A549 (cell line): ENCODE measurements at regions of chr5 and their contacts with region 1.

Region 1: GRCh38 chr5:42994246-42995151 is 45.6 kb downstream of the ANXA2R start:
- DNase-seq: peak; percentile 64 to 94
- ATAC-seq: peak; percentile 69 to 82
- H3K4me3 ChIP-seq: peak overlapping the region; percentile 64
- H3K27ac ChIP-seq: peak overlapping the region; percentile 87 to 94
- H3K4me1 ChIP-seq: peaks cover 24% of the 10 kb centered on the region
- CTCF ChIP-seq: peak; percentile 67
- EP300 ChIP-seq: no peak
- POLR2A ChIP-seq: no peak
- RAD21 ChIP-seq: peak; percentile 67 to 69

Region 2: DNA sequence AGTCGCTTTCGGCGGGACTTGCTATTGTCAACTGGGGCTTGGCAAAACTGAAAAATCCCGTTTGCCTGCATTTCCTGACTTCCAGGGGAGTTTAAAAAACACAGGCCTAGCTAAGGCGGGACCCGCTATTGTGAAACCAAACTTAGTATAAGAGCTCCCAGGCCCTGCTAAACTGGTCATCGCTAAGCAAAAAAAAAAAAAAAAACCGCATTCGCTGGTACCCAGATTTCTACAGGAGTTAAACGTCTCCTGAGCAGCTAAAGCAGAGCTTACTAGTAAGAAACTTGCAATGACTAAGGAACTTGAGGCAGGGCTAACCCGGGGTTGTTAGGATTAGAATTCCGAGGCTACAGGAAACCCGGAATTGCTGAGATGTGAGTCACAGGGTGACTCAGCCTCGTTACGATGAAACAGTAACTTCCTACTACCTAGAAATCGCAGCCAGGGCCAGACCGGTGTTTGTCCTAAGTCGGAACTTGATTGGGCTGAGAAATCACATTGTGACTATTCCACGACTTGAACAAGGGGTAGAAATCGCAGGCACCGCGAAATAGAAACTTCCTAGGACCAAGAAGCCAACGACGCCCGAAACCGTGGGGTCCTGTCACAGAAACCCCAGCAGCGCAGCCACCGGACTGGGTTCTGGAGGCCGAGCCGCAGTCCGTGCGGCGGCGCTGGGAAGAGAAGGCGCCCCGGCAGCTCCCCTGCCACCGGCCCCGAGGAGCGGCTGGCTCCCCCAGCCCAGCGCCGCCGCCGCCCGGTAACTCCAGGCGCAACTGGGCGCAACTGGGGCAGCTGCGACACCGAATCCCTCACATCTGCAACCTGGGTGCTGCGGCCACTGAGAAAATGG is 43.8 kb before region 1 on chr5:
- CTCF ChIA-PET with region 1: interaction called, 30 read pairs
- POLR2A ChIA-PET with region 1: interaction called, 57 read pairs
- DNase-seq: peak; percentile 97 to 99
- ATAC-seq: peak; percentile 93 to 94
- H3K4me3 ChIP-seq: peak overlapping the region; percentile 37
- H3K27ac ChIP-seq: peak overlapping the region; percentile 95 to 99
- H3K4me1 ChIP-seq: peaks cover 19% of the 10 kb centered on the region
- CTCF ChIP-seq: no peak
- EP300 ChIP-seq: peak; percentile 51 to 63; a peak in 2 of 5 replicates
- POLR2A ChIP-seq: no peak
- RAD21 ChIP-seq: 0 out of 5 replicates have a peak, but pooled peaks of 1 of the 2 experiments have one; percentile 27

Region 3: GRCh38 chr5:42982107-42982622 is 12.3 kb before region 1 on chr5:
- CTCF ChIA-PET with region 1: interaction called, 8 read pairs
- POLR2A ChIA-PET with region 1: interaction called, 11 read pairs
- DNase-seq: peak in 1 of 2 experiments; percentile 79
- ATAC-seq: peak in 1 of 2 experiments; percentile 21; a peak in 2 of 6 replicates
- H3K4me3 ChIP-seq: no peak overlapping the region
- H3K27ac ChIP-seq: peak overlapping the region; percentile 77 to 85
- H3K4me1 ChIP-seq: peaks cover 45% of the 10 kb centered on the region
- CTCF ChIP-seq: no peak
- EP300 ChIP-seq: no peak
- POLR2A ChIP-seq: no peak
- RAD21 ChIP-seq: no peak

Region 4: GRCh38 chr5:43008369-43009153 is 14.1 kb after region 1 on chr5:
- CTCF ChIA-PET with region 1: interaction called, 63 read pairs
- POLR2A ChIA-PET with region 1: interaction called, 49 read pairs
- DNase-seq: peak; percentile 84 to 98
- ATAC-seq: peak; percentile 81 to 85
- H3K4me3 ChIP-seq: peak overlapping the region; percentile 56
- H3K27ac ChIP-seq: peak overlapping the region; percentile 93 to 95
- H3K4me1 ChIP-seq: peaks cover 13% of the 10 kb centered on the region
- CTCF ChIP-seq: peak; percentile 34
- EP300 ChIP-seq: no peak
- POLR2A ChIP-seq: peak; percentile 64
- RAD21 ChIP-seq: peak in 1 of 2 experiments; percentile 34; a peak in 3 of 5 replicates

Region 5: GRCh38 chr5:43019614-43020293 is 25.3 kb after region 1 on chr5:
- CTCF ChIA-PET with region 1: interaction called, 63 read pairs
- POLR2A ChIA-PET with region 1: interaction called, 10 read pairs
- DNase-seq: peak; percentile 51 to 88
- ATAC-seq: peak; percentile 68
- H3K4me3 ChIP-seq: peak overlapping the region; percentile 55
- H3K27ac ChIP-seq: peak overlapping the region; percentile 90 to 96
- H3K4me1 ChIP-seq: peaks cover 24% of the 10 kb centered on the region
- CTCF ChIP-seq: no peak
- EP300 ChIP-seq: no peak
- POLR2A ChIP-seq: no peak
- RAD21 ChIP-seq: no peak

Region 6: DNA sequence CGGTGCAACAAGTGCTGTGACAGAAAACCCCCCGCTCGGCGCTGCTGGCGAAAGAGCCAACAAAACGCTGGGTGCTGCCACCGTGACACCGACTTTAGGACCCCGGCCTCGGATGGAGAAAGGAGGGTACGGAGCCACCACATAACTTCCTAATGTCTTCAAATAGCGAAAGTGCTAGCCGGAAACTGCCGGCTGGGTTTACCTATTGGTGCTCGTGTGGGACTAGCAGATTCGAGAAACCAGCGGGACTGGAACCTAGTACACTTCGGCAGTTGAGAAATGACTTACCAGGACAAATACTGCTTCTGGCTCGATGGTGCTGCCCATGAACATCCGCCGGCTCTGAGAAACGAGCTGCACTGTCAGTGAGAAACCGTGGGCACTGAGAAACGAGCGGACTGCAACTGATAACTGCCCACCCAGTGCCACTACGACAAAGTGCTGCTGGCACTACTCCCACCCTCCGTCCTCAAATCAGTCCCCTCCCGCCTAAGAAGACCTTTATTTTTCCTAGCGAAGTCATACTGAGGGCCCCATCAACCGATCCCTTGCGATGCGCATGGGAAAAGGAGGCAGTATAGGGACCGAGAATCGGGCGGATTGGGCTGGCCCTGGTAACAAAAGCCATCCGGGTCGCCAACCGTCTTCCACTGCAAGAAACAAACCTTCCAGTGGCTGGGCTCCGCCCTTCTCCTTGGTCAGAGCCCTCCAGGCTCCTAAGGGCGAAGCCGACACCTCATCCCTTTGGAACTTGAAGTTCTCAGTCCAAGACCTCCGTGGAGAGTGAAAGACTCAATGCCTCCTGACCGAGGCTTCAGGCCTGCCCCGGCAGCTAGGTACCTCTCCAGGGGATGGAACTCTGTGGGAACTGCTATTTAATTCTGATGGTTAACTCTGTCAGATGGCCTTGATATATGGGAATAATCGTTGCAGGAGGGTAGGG is 72.6 kb after region 1 on chr5:
- CTCF ChIA-PET with region 1: interaction called, 19 read pairs
- POLR2A ChIA-PET with region 1: interaction called, 11 read pairs
- DNase-seq: peak; percentile 59 to 93
- ATAC-seq: peak; percentile 69 to 78
- H3K4me3 ChIP-seq: peak overlapping the region; percentile 57
- H3K27ac ChIP-seq: peak overlapping the region; percentile 92 to 93
- H3K4me1 ChIP-seq: peaks cover 23% of the 10 kb centered on the region
- CTCF ChIP-seq: no peak
- EP300 ChIP-seq: no peak
- POLR2A ChIP-seq: no peak; the same call in none of the 2 replicates
- RAD21 ChIP-seq: no peak